Left cardiac atrium (tissue), 4 donors: ENCODE measurements at regions of chr15 and their contacts with region 1.

Region 1: GRCh38 chr15:95826412-95827195 is 503.9 kb upstream of the NR2F2 start:
- DNase-seq: no peak
- ATAC-seq: no peak

Region 2: GRCh38 chr15:95783235-95783634 is 43.4 kb before region 1 on chr15:
- intact Hi-C with region 1: no loop called
- DNase-seq: no peak
- ATAC-seq: no peak

Region 3: DNA sequence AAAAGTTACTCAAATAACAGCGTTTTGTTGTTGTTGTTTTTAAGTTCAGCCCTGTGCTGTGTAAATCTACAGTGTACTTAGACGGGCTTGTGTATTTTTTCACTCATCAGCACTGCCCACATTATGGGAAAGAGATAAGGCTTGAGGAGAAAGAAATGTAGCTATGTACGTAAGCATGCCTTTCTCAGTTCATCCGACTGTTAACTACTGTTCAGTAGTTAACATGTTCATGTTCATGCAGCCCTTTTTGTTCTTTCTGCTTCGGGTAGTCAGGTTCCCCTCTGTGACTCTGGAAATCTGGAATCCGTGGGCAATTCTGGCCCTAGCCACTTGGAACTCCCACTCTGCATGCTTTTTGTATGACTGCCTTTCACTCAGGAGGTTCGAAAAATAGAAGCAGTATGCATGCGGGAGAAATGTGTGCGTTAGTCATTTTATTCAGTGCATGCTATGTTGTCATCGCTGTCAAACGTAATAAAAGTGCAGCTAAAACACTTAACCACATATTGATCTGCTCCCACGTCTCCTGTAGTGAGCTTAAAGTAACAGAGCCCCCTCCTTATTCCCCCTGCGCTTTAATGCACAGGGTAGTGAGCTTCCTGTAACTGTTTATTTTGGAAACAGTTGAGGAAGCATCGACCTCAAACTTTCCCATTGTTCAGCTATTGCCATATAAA is 220.8 kb after region 1 on chr15:
- intact Hi-C with region 1: loop called in 1 of 2 experiments (anchors 10 kb)
- DNase-seq: no peak
- ATAC-seq: peak; percentile 68 to 86